Posterior vena cava (tissue), 2 donors: ENCODE measurements at regions of chr19 and their contacts with region 1.

Region 1: DNA sequence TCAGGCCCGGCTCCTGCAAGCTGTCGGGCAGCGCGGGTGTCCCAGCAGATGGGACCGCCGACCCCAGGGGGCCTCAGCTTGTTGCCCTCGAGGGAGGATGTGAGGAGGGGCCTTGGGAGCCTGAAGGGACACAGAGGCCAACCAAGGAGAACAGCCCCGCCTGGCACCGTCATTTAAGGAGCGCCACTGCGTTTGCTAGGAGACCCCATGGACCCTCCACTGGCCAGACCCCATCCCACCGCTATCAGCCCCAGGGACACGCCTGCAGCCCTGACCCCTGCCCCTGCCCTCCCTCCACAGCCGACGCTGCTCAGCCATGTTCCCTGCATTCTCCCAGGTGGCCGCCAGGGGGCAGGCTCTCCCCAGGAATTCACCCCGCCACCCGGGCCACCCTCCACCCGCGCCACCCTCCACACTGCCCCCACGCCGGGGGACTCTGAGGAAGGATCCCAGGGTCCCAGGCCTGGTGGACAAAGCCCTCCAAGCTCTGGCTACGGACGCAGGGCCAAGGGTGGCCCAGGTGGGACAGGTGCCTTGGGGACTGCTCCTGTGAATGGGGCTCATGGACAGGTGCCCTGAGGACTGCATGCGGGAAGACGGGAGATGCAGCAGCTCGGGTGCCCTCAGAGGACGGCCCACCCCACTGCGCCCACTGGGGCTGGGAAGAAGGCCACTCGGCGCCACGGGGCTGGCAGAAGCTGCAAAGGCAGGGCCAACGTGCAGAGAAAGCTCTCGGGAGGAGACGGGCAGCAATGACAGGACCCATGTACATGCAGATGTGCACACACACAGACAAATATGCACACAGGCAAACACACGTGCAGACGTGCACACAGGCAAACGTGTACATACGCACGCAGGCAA is 34.4 kb downstream of the PIP5K1C start:
- DNase-seq: peak; percentile 93

Region 2: DNA sequence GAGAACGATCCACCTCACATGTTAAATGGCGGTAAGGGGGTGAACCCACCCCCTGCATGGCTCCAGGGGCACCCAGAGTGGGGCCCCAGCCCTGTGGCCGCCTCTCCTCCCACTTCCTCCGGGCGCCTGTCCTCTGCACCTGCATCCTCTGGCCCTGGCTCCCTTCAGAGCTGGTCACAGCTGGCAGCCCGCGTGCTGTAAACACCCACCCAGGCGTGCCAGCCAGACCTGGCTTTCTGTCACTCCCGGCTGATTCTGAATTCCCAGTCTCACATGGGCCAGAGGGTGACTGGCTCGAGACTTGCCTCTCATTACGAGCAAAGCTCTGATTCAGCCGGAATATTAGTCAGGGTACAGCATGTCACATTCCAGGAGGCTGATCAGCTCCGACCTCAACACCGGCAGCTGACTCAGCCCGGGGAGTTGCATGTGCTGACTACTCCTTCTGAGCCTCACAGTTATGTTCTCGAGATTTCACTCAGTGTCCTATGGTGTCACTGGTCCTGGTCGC is 1038.5 kb before region 1 on chr19:
- intact Hi-C with region 1: no loop called
- DNase-seq: peak; percentile 95

Region 3: DNA sequence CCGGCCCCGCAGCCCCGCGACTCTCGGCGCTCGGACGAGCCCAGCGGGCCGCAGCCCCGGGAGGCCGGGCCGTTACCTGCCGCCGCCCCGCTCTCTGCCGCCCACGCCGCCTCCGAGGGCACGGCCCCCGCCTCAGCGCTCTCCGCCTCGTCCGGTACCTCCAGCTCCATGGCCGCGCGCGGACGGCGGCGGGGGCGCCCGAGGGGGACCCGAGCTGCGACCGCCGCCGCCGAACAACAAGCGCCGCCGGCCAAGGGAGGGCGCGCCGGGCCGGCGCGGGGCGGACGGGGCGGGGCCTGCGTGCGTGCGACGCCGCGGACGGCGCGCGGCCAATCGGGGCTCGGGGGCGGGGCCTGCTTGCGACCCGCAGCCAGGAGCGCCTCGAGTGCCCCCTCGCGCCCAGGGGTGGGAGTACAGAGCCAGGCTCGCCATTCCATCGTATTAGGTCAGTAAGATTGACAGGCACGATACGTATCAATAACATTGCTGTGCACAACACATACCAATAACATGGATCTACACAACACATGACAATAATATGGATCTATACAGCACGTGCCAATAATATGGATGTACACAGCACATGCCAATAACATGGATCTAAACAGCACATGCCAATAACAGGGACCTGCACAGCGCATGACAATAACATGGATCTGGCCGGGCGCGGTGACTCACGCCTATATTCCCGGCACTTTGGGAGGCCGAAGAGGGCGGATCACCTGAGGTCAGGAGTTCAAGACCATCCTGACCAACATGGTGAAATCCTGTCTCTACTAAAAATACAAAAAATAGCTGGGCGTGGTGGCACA is 34.5 kb after region 1 on chr19 and contains the start of gene PIP5K1C:
- intact Hi-C with region 1: loop called (anchors 2 kb)
- DNase-seq: peak; percentile 97
- total RNA-seq, gene PIP5K1C: 80.9 to 85.4 TPM

Region 4: DNA sequence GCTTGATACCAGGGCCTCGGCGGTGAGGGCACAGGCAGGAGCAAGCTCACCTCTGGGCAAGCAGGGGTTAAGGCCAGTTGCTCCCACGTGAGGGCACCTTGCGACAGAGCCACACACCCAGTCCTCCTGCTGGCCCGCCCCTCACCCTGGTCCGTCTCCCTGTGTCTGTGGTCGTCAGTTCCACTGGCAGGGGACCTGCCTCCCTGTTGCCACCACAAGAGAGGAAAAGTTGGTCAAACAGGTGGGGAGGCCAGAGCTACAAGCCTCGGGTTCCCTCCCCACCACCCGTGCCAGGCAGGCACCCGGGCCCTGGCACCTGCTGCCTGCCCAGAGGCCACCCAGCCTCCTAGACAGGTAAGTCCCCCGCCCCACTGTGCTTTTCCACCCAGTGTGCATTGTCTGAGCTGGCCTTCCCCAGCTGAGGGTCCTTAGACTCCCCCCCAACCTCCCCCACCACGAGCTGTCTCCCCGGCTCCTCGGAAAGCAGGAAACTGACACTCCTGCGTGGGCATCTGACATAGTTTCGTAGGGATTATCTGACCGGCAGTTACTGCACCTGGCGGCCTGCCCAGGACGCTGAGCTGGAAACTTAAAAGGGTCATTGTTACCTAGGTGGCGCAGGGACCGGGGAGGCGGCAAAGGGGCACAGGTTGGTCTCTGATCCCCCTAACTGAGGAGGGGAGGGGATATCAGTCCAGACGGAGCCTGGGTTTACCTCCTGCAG is 42.5 kb after region 1 on chr19 and contains the start of gene TJP3:
- intact Hi-C with region 1: loop called in 1 of 2 experiments (anchors 2 kb)
- DNase-seq: no peak
- total RNA-seq, gene TJP3: 0.10 TPM in 1 of 2 donors, not detected in the other

Region 5: GRCh38 chr19:3748965-3749364 is 83.1 kb after region 1 on chr19:
- intact Hi-C with region 1: no loop called
- DNase-seq: no peak

Region 6: GRCh38 chr19:3830621-3831589 is 165.0 kb after region 1 on chr19:
- intact Hi-C with region 1: no loop called
- DNase-seq: no peak